ENCODE measurements at regions of chr10 and their contacts with region 1.

Region 1: GRCh38 chr10:31864834-31865518 is 63.7 kb downstream of the ARHGAP12 start:
- DNase-seq: no peak
- H3K4me3 ChIP-seq: no peak overlapping the region
- H3K27ac ChIP-seq: no peak overlapping the region
- H3K4me1 ChIP-seq: peaks cover 0 to 6% (median 2%) of the 10 kb centered on the region in 4 experiments
- H3K27me3 ChIP-seq: no peaks in the 10 kb centered on the region

Region 2: GRCh38 chr10:31819391-31819820 is 45.6 kb before region 1 on chr10:
- CTCF ChIA-PET with region 1: no interaction called
- POLR2A ChIA-PET with region 1: no interaction called
- DNase-seq: no peak
- H3K4me3 ChIP-seq: no peak overlapping the region
- H3K27ac ChIP-seq: no peak overlapping the region
- H3K4me1 ChIP-seq: no peaks in the 10 kb centered on the region
- H3K27me3 ChIP-seq: no peaks in the 10 kb centered on the region

Region 3: DNA sequence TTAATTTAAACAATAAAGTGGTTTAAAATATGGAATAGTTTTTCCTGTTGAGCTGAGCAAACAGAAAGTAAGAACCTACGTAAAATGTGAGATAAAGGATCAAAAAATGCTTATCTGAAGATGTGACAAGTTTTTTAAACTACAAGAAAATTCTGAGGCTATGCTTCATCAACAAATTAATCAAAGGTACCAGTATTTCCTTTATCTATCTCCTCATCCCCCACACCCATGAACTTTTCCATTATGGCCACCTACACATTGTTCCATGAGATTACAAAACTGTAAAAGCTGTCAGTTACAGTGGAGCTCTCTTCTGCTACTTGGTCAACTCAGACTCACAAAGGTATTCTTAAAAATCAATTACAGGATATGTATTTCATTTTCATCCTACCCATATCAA is 13.8 kb before region 1 on chr10:
- CTCF ChIA-PET with region 1: interaction called, 12 read pairs
- POLR2A ChIA-PET with region 1: no interaction called
- DNase-seq: no peak
- H3K4me3 ChIP-seq: no peak overlapping the region
- H3K27ac ChIP-seq: no peak overlapping the region
- H3K4me1 ChIP-seq: no peaks in the 10 kb centered on the region
- H3K27me3 ChIP-seq: no peaks in the 10 kb centered on the region

Region 4: DNA sequence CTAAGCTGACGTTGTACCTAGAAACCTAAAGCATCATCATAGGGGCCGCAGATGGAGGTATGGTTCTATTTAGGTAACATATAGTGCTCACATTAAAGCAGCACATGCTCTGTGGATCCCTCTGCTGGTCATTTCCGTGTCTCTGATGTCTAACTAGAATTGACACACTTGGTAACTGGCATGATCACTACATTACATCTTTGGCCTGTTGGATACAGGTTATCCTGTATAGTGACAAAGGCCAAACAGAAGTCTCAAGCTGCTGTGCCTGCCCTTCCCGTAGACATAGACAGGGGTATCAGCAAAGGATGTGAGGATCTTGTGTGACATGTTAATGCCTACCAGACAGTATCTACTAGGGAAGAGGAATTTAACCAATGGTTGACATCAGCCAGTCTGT is 140.1 kb after region 1 on chr10:
- CTCF ChIA-PET with region 1: interaction called, 75 read pairs
- POLR2A ChIA-PET with region 1: interaction called, 4 read pairs
- DNase-seq: peak; percentile 44 to 76 (median 67)
- H3K4me3 ChIP-seq: no peak overlapping the region
- H3K27ac ChIP-seq: no peak overlapping the region
- H3K4me1 ChIP-seq: no peaks in the 10 kb centered on the region
- H3K27me3 ChIP-seq: no peaks in the 10 kb centered on the region